ENCODE measurements at regions of chr12 and their contacts with region 1.

Region 1: GRCh38 chr12:12081836-12082497 is 11.2 kb downstream of the BCL2L14 start:
- DNase-seq: peak in 1 of 5 donors; percentile 31
- ATAC-seq: peak; percentile 72 to 93 (median 81)
- H3K4me3 ChIP-seq: no peak overlapping the region
- H3K27ac ChIP-seq: peak overlapping the region; percentile 11 to 79 (median 68)
- H3K4me1 ChIP-seq: peaks cover 0 to 9% (median 2%) of the 10 kb centered on the region in 12 donors
- H3K27me3 ChIP-seq: no peaks in the 10 kb centered on the region
- CTCF ChIP-seq: peak in 11 of 12 donors; percentile 24 to 60 (median 44)
- POLR2A ChIP-seq: no peak

Region 2: GRCh38 chr12:12004524-12004923 is 77.4 kb before region 1 on chr12:
- intact Hi-C with region 1: no loop called
- DNase-seq: no peak
- ATAC-seq: no peak
- H3K4me3 ChIP-seq: no peak overlapping the region
- H3K27ac ChIP-seq: no peak overlapping the region
- H3K4me1 ChIP-seq: peaks cover 0 to 27% (median 0%) of the 10 kb centered on the region in 12 donors
- H3K27me3 ChIP-seq: no peaks in the 10 kb centered on the region
- CTCF ChIP-seq: no peak
- POLR2A ChIP-seq: no peak

Region 3: GRCh38 chr12:12056951-12057350 is 25.0 kb before region 1 on chr12:
- intact Hi-C with region 1: no loop called
- DNase-seq: no peak
- ATAC-seq: no peak
- H3K4me3 ChIP-seq: no peak overlapping the region
- H3K27ac ChIP-seq: no peak overlapping the region
- H3K4me1 ChIP-seq: no peaks in the 10 kb centered on the region
- H3K27me3 ChIP-seq: no peaks in the 10 kb centered on the region
- CTCF ChIP-seq: no peak
- POLR2A ChIP-seq: no peak

Region 4: GRCh38 chr12:12327802-12328201 is 245.8 kb after region 1 on chr12:
- intact Hi-C with region 1: loop called (anchors 2 to 5 kb)
- DNase-seq: no peak
- ATAC-seq: peak in 3 of 4 donors; percentile 41 to 57 (median 57)
- H3K4me3 ChIP-seq: no peak overlapping the region
- H3K27ac ChIP-seq: peak overlapping the region in 6 of 12 donors; percentile 0 to 63 (median 36)
- H3K4me1 ChIP-seq: peaks cover 0 to 12% (median 8%) of the 10 kb centered on the region in 12 donors
- H3K27me3 ChIP-seq: no peaks in the 10 kb centered on the region
- CTCF ChIP-seq: peak; percentile 45 to 84 (median 70)
- POLR2A ChIP-seq: no peak

Region 5: GRCh38 chr12:12334367-12335040 is 252.5 kb after region 1 on chr12:
- intact Hi-C with region 1: loop called in 8 of 10 experiments (anchors 1 to 5 kb)
- DNase-seq: peak; percentile 35 to 67 (median 47)
- ATAC-seq: peak in 3 of 4 donors; percentile 50 to 66 (median 52)
- H3K4me3 ChIP-seq: no peak overlapping the region
- H3K27ac ChIP-seq: peak overlapping the region in 1 of 12 donors; percentile 53
- H3K4me1 ChIP-seq: peaks cover 0 to 25% (median 11%) of the 10 kb centered on the region in 12 donors
- H3K27me3 ChIP-seq: no peaks in the 10 kb centered on the region
- CTCF ChIP-seq: peak; percentile 76 to 94 (median 82)
- POLR2A ChIP-seq: no peak

Region 6: DNA sequence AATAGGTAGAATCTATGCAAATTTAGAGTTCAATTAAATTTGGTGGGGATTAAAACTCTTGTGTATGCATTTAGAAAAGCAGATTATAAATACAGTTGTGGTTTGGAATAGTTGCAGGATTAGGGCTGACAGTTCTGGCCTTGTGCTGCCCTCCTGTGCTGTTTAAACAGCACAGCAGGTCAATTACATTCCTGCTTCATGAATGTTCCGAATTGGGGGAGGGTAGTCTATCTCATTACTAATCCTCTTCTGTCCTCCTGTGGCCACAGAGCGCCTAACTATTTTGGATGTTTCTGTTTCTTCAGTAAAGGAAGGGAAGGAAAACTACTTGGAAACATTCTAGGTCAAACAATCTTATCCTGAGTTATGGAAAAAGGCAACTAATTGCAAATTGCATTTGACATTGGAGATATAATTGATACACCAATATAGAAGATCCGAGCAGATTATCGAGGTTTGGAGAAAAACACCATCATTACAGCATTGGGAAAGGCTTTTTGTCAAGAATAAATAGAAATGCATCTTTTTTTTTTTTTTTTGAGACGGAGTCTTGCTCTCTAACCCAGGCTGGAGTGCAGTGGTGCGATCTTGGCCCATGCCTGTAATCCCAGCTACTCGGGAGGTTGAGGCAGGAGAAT is 622.7 kb after region 1 on chr12:
- intact Hi-C with region 1: loop called in 1 of 10 experiments (anchors 10 kb)
- DNase-seq: peak in 4 of 5 donors; percentile 37 to 63 (median 56)
- ATAC-seq: peak; percentile 94 to 99 (median 99)
- H3K4me3 ChIP-seq: no peak overlapping the region
- H3K27ac ChIP-seq: no peak overlapping the region
- H3K4me1 ChIP-seq: peaks cover 0 to 20% (median under 1%) of the 10 kb centered on the region in 12 donors
- H3K27me3 ChIP-seq: no peaks in the 10 kb centered on the region
- CTCF ChIP-seq: peak; percentile 62 to 94 (median 84)
- POLR2A ChIP-seq: no peak